B cell (primary cell): ENCODE measurements at regions of chr2 and their contacts with region 1.

Region 1: GRCh38 chr2:174078275-174078674 is 113.1 kb upstream of the SP3 start:
- DNase-seq: peak; percentile 22
- ATAC-seq: no peak
- H3K4me3 ChIP-seq: no peak overlapping the region
- H3K4me3 Mint-ChIP-seq: no peak overlapping the region
- H3K27ac ChIP-seq: no peak overlapping the region
- H3K27ac Mint-ChIP-seq: no peak overlapping the region
- H3K4me1 ChIP-seq: no peaks in the 10 kb centered on the region
- H3K4me1 Mint-ChIP-seq: no peaks in the 10 kb centered on the region
- H3K27me3 ChIP-seq: no peaks in the 10 kb centered on the region
- H3K27me3 Mint-ChIP-seq: no peaks in the 10 kb centered on the region
- CTCF ChIP-seq: peak; percentile 65

Region 2: DNA sequence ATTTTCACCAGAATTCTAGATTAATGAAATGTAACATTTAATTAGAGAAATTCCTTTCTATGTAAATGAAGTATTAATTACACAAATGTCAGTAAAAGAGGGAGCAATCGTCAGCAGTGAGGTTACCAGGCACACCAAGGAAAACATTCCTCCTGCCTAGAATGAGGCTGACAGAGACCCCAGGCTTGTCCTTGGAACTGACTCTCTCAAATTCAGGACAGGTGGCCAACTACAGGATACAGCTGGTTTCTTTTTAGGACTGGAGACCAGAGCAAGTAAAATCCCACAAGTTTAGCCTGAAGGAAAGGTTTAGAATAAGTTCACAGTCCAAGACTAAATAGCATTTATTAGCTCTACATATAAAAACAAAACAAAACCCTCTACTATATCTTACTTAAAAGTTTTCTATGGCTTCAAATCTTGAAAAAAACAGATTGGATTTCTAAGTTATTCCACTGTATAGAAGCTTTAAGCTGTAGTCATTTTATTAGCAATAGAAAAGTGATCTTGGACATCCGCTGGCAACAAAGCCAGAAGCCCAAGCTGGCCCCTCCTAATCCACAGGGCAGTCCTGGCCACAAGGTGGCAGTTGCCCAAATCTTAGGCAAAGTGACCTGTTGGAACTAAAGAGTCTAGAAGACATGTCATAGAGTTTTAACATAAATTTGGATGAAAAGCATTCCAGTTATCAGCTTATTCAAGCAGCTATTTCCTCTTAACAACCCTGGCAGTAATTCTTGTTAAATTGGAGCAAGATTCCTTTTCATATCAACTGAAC is 194.1 kb before region 1 on chr2:
- CTCF ChIA-PET with region 1: interaction called, 7 read pairs
- POLR2A ChIA-PET with region 1: no interaction called
- intact Hi-C with region 1: loop called (anchors 1 kb)
- DNase-seq: peak; percentile 36
- ATAC-seq: peak; percentile 57
- H3K4me3 ChIP-seq: no peak overlapping the region
- H3K4me3 Mint-ChIP-seq: no peak overlapping the region
- H3K27ac ChIP-seq: no peak overlapping the region
- H3K27ac Mint-ChIP-seq: no peak overlapping the region
- H3K4me1 ChIP-seq: no peaks in the 10 kb centered on the region
- H3K4me1 Mint-ChIP-seq: no peaks in the 10 kb centered on the region
- H3K27me3 ChIP-seq: peaks cover 0 to 4% (median 0%) of the 10 kb centered on the region in 4 experiments
- H3K27me3 Mint-ChIP-seq: peaks cover 18% of the 10 kb centered on the region
- CTCF ChIP-seq: peak; percentile 28